ENCODE measurements at regions of chr19 and their contacts with region 1.

Region 1: GRCh38 chr19:55279770-55280643 is at the start of gene HSPBP1:
- DNase-seq: peak; percentile 88 to 96 (median 96)
- ATAC-seq: peak; percentile 92
- H3K4me3 ChIP-seq: peak within 1 kb of the TSS; percentile 91
- H3K4me3 Mint-ChIP-seq: peak within 1 kb of the TSS; percentile 92 to 100 (median 98)
- H3K27ac ChIP-seq: peak within 1 kb of the TSS; percentile 89
- H3K27ac Mint-ChIP-seq: peak within 1 kb of the TSS; percentile 91 to 100 (median 98)
- H3K4me1 ChIP-seq: peaks cover 6 to 32% of the 10 kb centered on the region in 2 donors
- H3K4me1 Mint-ChIP-seq: peaks cover 12 to 52% (median 39%) of the 10 kb centered on the region in 7 donors
- H3K27me3 ChIP-seq: no peaks in the 10 kb centered on the region
- H3K27me3 Mint-ChIP-seq: peaks cover 0 to 9% (median 0%) of the 10 kb centered on the region in 5 donors
- total RNA-seq, gene HSPBP1: 15.0 to 30.0 (median 16.0) TPM

Region 2: DNA sequence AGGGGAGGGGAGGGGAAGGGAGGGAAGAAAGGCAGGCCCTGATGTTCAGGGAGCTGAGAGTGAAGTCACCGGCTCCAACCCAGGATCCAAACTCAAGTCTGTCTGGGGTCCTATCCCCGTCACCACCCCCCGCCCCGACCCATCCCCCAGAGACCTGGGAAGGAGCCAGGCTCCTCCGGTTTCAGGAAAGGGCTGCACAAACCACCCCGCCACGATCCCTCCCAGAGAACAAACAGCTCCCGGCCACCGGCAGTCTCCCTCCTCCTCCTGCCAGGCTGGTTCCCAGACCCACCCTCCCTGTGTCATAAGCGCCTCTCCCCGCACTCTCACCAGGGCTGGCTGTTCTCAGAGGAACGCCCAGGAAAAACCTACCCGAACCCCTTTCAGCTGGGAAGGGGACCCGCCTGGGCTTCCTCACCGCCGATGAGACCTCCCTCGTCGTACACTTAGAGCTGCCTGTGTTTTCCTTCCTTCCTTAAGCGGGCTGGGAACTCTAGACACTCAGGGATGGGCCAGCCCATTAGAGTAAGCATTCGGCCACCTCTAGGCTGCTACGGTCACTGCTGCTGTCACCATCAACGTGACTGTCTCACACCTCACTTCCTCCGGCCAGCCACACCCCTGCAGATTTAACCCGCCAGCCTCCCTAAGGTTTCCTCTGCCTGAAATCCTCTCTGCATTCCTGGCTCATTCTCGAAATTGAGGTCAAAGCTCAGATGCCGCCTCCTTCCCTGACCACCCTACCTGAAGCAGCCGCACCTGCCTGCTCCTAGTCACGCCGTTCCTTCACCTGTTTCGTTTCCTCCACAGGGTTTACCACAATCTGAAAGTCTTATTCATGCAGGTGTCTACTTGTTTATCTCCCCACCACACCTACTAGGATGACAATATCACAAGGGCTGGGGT is 210.8 kb before region 1 on chr19:
- CTCF ChIA-PET with region 1: no interaction called
- POLR2A ChIA-PET with region 1: no interaction called
- intact Hi-C with region 1: no loop called
- DNase-seq: no peak
- ATAC-seq: peak; percentile 68
- H3K4me3 ChIP-seq: no peak overlapping the region
- H3K4me3 Mint-ChIP-seq: peak overlapping the region; percentile 48 to 78 (median 70)
- H3K27ac ChIP-seq: no peak overlapping the region
- H3K27ac Mint-ChIP-seq: peak overlapping the region in 3 of 9 donors; percentile 39 to 44 (median 39)
- H3K4me1 ChIP-seq: peaks cover 0 to 11% of the 10 kb centered on the region in 2 donors
- H3K4me1 Mint-ChIP-seq: peaks cover 7 to 20% (median 9%) of the 10 kb centered on the region in 7 donors
- H3K27me3 ChIP-seq: peaks cover 8 to 16% of the 10 kb centered on the region in 2 donors
- H3K27me3 Mint-ChIP-seq: peaks cover 65 to 73% (median 68%) of the 10 kb centered on the region in 5 donors

Region 3: DNA sequence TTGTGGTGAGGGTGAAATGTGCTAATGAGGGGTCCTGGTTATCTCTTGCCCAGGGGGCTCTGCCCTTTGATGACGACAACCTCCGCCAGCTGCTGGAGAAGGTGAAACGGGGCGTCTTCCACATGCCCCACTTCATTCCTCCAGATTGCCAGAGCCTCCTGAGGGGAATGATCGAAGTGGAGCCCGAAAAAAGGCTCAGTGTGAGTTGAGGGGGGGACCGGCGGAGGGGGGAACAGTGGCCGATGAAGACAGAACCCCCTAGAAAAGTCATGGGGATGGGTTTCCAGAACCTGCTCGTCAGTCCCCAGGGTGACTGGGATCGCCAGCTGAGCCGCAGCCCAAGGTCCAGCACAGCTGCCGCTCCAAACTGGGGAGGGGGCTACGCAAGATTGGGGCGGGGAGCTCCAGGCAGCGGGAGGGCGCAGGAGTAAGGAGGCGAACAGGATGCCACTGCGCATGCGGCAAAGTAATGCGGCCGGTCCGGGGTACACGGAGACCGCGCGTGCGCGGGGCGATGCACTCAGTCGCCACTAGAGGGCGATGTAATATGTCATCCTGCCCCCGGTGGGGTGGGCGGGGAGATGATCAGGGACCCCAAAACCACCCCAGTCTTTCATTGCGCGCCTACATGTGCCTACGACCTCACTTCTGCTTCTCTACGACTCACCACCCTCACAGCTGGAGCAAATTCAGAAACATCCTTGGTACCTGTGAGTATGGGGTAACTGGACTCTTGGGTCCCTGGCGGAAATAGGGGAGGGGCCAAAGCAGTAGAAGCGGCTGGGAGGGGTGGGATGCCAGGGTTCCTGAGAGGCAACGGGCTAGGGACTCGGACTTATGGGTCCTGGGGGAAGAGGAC is 21.7 kb after region 1 on chr19:
- CTCF ChIA-PET with region 1: no interaction called
- POLR2A ChIA-PET with region 1: interaction called, 5 read pairs
- intact Hi-C with region 1: loop called in 1 of 2 experiments (anchors 1 kb)
- DNase-seq: peak; percentile 84 to 97 (median 91)
- ATAC-seq: peak; percentile 97
- H3K4me3 ChIP-seq: peak overlapping the region; percentile 61
- H3K4me3 Mint-ChIP-seq: peak overlapping the region; percentile 77 to 97 (median 88)
- H3K27ac ChIP-seq: peak overlapping the region; percentile 66
- H3K27ac Mint-ChIP-seq: peak overlapping the region; percentile 66 to 95 (median 84)
- H3K4me1 ChIP-seq: peaks cover 5 to 10% of the 10 kb centered on the region in 2 donors
- H3K4me1 Mint-ChIP-seq: peaks cover 0 to 17% (median 11%) of the 10 kb centered on the region in 7 donors
- H3K27me3 ChIP-seq: no peaks in the 10 kb centered on the region
- H3K27me3 Mint-ChIP-seq: peaks cover 0 to 3% (median 0%) of the 10 kb centered on the region in 5 donors

Region 4: DNA sequence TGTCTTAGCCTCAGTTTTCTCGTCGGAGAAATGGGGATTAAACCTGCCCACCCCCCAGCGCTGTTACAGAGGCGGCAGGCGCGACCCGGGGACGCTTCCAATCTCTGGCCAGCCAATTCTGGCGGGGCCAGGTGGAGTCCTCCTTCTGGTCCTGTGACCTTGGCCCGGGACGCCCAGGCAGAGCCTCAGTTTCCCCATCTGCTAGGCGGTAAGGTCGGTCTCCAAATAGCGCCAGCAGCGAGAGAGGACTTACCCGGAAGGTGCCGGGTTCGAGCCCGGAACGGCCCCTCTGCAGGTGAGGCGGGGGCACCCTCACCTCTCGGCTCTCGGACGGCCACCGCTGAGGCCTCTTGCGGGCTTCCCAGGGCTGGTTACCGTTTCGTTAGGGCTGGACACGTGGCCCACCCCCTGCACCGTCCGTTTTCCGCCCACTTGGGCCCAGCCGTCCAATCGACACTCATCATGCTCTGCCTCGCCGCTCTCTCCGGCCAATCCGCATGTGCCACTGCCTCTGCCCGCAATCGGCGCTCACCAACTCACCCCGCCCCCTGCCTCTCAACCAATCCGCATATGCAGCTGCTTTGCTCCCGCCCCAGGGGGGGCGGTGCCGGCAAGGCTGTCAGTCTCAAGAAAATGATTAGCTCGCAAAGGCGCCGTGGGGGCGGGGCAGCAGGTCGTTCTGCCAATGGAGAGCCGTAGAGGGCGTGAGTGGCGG is 181.4 kb after region 1 on chr19 and contains the start of gene ISOC2:
- CTCF ChIA-PET with region 1: no interaction called
- POLR2A ChIA-PET with region 1: no interaction called
- intact Hi-C with region 1: loop called in 1 of 2 experiments (anchors 2 kb)
- DNase-seq: peak; percentile 99 to 100 (median 100)
- ATAC-seq: peak; percentile 98
- H3K4me3 ChIP-seq: peak within 1 kb of the TSS; percentile 91
- H3K4me3 Mint-ChIP-seq: peak within 1 kb of the TSS; percentile 86 to 99 (median 92)
- H3K27ac ChIP-seq: peak within 1 kb of the TSS; percentile 79
- H3K27ac Mint-ChIP-seq: peak within 1 kb of the TSS; percentile 68 to 94 (median 90)
- H3K4me1 ChIP-seq: peaks cover 4 to 12% of the 10 kb centered on the region in 2 donors
- H3K4me1 Mint-ChIP-seq: peaks cover 14 to 33% (median 20%) of the 10 kb centered on the region in 7 donors
- H3K27me3 ChIP-seq: no peaks in the 10 kb centered on the region
- H3K27me3 Mint-ChIP-seq: peaks cover 0 to 2% (median 0%) of the 10 kb centered on the region in 5 donors
- total RNA-seq, gene ISOC2: 5.1 to 20.1 (median 11.3) TPM

Measured in naive thymus-derived CD4-positive, alpha-beta T cell (primary cell).